ENCODE measurements at regions of chr2 and their contacts with region 1.

Region 1: GRCh38 chr2:96260404-96261260 is 5.2 kb downstream of the TMEM127 start:
- DNase-seq: peak; percentile 61 to 81
- ATAC-seq: peak; percentile 74 to 83 (median 80)
- H3K4me3 ChIP-seq: peak overlapping the region; percentile 45
- H3K27ac ChIP-seq: peak overlapping the region; percentile 97
- H3K4me1 ChIP-seq: peaks cover 87% of the 10 kb centered on the region
- H3K27me3 ChIP-seq: no peaks in the 10 kb centered on the region
- CTCF ChIP-seq: peak; percentile 50

Region 2: DNA sequence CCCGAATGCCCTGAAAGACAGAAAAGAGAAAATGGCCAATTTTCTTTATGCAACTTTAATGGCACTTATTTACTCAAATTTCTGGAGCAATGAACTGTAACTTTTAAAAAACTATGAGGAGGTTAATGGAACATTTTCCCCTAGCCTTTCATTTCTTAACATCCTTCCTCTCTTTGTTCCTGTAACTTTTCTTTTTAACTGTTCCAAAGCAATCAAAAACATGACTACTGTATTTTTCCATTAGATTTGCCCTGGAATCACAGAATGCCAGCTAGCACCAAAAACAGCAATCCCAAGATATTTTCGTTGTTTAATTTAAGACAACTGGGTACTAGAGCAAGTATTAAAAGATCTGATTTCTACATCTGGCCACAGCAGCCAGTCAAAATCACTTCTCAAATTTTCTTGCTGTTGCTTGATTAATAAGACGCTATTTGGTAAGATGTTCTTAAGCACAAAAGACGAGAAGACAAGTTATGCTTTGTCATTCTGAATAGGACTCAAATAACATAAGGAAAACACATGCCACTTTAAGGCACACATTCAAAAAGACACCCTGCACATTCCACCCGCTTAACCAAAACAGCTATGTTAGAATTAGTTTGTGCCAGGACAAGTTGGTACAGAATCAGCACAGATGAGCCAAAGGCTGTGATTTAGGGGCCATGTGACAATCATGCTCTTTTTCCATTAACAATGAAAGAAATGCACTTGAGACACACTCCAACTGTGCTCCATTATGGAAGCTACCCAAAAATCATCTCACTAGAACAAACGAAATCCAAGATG is 55.6 kb before region 1 on chr2:
- intact Hi-C with region 1: loop called in 1 of 2 experiments (anchors 2 kb)
- DNase-seq: no peak
- ATAC-seq: peak in 1 of 4 donors; percentile 26
- H3K4me3 ChIP-seq: peak overlapping the region; percentile 96
- H3K27ac ChIP-seq: peak overlapping the region; percentile 99
- H3K4me1 ChIP-seq: peaks cover 60% of the 10 kb centered on the region
- H3K27me3 ChIP-seq: no peaks in the 10 kb centered on the region
- CTCF ChIP-seq: no peak

Measured in psoas muscle (tissue), 8 donors.